Vagina (tissue), 2 donors: ENCODE measurements at regions of chr19 and their contacts with region 1.

Region 1: DNA sequence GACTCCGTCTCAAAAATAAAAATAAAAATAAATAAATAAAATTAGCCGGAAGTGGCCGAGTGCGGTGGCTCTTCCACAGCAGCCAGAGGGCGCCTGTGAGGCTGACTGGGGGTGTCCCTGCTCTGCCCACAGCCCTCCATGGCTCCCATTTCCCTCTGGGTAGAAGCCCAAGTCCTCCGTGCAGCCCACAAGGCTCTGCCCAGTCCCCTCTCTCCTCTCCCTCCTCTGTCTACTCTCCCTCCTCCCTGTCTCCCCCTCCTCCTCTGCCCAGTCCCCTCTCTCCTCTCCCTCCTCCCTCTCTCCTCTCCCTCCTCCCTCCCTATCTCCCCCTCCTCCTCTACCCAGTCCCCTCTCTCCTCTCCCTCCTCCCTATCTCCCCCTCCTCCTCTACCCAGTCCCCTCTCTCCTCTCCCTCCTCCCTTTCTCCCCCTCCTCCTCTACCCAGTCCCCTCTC is 20.4 kb downstream of the MISP start:
- DNase-seq: no peak
- H3K4me3 ChIP-seq: no peak overlapping the region
- H3K27ac ChIP-seq: no peak overlapping the region
- H3K4me1 ChIP-seq: peaks cover 18% of the 10 kb centered on the region
- H3K27me3 ChIP-seq: no peaks in the 10 kb centered on the region
- CTCF ChIP-seq: peak in 1 of 3 experiments; percentile 22
- POLR2A ChIP-seq: no peak

Region 2: GRCh38 chr19:708154-709143 is 62.9 kb before region 1 on chr19 and contains the start of gene PALM:
- intact Hi-C with region 1: no loop called
- DNase-seq: no peak
- H3K4me3 ChIP-seq: peak within 1 kb of the TSS; percentile 59 to 73
- H3K27ac ChIP-seq: peak within 1 kb of the TSS; percentile 88
- H3K4me1 ChIP-seq: peaks cover 41% of the 10 kb centered on the region
- H3K27me3 ChIP-seq: no peaks in the 10 kb centered on the region
- CTCF ChIP-seq: no peak
- POLR2A ChIP-seq: no peak
- total RNA-seq, gene PALM: 40.0 TPM

Region 3: DNA sequence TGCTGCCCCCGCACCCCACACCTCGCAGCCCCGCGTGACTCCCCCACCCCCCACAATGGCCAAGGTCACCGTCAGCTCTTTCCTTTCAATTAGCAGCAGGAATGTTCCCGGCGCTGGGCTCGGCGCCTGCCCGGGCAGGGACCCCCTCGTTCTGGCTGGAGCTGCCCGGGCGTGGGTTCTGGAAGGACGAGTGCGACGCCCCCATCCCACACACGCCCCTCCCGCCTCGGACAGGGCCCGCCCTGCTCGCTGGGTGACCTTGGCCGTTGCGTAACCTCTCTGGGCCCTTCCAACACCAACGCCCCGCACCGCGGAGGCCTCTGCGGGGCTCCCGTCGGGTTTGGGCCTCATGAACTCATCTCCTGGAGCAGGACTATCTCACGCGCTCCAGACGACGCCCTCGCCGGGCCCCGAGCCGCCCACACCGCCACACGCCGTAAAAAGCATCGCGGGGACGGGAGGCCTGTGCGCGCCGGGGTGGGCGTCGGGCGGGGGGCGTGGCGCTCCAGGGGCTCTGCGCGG is 52.3 kb before region 1 on chr19:
- intact Hi-C with region 1: no loop called
- DNase-seq: no peak
- H3K4me3 ChIP-seq: peak overlapping the region; percentile 35 to 54
- H3K27ac ChIP-seq: peak overlapping the region; percentile 91
- H3K4me1 ChIP-seq: peaks cover 47% of the 10 kb centered on the region
- H3K27me3 ChIP-seq: no peaks in the 10 kb centered on the region
- CTCF ChIP-seq: no peak
- POLR2A ChIP-seq: peak in 1 of 2 donors; percentile 14

Region 4: GRCh38 chr19:860481-861101 is 89.2 kb after region 1 on chr19:
- intact Hi-C with region 1: loop called (anchors 10 kb)
- DNase-seq: no peak
- H3K4me3 ChIP-seq: peak overlapping the region; percentile 53 to 59
- H3K27ac ChIP-seq: peak overlapping the region; percentile 92
- H3K4me1 ChIP-seq: peaks cover 48% of the 10 kb centered on the region
- H3K27me3 ChIP-seq: no peaks in the 10 kb centered on the region
- CTCF ChIP-seq: no peak
- POLR2A ChIP-seq: peak in 1 of 2 donors; percentile 7

Region 5: DNA sequence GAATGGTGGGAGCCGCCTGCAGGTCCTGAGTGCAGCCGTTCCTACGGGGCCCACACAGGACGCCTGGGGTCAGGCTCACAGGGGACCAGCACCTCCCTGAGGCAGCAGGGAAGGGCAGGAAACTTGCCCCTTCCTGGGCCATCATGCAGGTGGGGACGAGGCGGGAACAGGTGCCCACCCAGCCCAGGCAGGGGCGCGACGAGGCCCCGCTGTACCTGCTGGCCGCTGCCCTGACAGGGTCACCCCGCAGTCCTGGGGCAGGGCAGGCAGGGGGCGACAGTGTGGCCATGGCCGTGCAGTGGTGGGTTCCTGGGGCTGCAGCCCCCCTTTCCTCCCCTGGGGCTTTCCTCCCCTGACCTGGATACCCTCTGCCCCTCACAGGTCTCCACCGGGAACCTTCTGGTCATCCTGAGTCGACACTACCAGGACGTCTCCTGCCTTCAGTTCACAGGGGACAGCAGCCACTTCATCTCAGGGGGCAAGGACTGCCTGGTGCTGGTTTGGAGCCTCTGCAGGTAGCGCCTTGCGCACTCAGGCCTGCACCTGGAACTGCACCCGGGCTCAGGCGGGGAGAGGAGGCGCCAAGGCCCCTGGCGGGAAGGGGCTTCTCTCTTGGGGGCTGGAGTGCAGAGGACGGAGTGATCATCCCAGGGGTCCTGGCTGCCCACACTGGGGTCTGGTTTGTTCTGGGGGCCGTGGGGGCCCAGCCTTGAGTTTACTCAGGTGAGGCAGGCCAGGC is 218.2 kb after region 1 on chr19:
- intact Hi-C with region 1: loop called (anchors 5 kb)
- DNase-seq: no peak
- H3K4me3 ChIP-seq: no peak overlapping the region
- H3K27ac ChIP-seq: no peak overlapping the region
- H3K4me1 ChIP-seq: peaks cover 10% of the 10 kb centered on the region
- H3K27me3 ChIP-seq: no peaks in the 10 kb centered on the region
- CTCF ChIP-seq: no peak
- POLR2A ChIP-seq: no peak